Adrenal gland (tissue), 19 donors: ENCODE measurements at regions of chr19 and their contacts with region 1.

Region 1: DNA sequence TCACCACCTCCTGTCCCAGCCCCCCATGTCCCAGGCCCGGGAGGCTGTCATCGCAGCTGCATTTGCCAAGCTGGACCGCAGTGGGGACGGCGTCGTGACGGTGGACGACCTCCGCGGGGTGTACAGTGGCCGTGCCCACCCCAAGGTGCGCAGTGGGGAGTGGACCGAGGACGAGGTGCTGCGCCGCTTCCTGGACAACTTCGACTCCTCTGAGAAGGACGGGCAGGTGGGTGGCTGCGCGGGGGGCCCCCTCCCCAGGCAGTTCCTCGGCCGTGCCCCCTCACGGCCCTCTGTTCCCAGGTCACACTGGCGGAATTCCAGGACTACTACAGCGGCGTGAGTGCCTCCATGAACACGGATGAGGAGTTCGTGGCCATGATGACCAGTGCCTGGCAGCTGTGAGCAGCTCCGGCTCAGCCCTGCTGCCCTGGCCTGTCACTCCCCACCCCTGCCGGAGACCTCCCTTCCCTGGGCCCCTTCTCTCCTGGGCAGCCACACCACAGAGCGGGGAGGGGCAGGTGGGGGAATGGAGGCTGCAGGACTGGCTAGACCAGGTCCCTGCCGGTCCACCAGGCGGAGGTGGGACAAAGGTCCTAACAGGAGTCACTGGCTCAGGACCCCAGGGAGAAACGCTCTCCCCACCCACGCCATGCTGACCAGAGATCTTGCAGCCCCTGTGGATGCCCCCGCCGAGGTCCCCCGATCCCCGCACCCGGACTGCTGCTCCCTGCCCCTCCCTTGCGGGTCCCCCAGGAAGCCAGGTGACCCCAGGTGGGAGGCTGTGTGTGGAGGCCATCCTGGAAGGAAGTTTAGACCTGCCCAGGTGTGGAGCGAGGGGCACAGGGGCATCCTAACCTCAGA is 1.1 kb downstream of the CAPS start:
- DNase-seq: peak in 1 of 7 donors; percentile 20
- H3K4me3 ChIP-seq: no peak overlapping the region
- H3K27ac ChIP-seq: peak overlapping the region in 1 of 5 donors; percentile 37
- H3K4me1 ChIP-seq: peaks cover 7 to 12% of the 10 kb centered on the region in 2 donors
- H3K27me3 ChIP-seq: no peaks in the 10 kb centered on the region
- CTCF ChIP-seq: no peak
- POLR2A ChIP-seq: no peak

Region 2: DNA sequence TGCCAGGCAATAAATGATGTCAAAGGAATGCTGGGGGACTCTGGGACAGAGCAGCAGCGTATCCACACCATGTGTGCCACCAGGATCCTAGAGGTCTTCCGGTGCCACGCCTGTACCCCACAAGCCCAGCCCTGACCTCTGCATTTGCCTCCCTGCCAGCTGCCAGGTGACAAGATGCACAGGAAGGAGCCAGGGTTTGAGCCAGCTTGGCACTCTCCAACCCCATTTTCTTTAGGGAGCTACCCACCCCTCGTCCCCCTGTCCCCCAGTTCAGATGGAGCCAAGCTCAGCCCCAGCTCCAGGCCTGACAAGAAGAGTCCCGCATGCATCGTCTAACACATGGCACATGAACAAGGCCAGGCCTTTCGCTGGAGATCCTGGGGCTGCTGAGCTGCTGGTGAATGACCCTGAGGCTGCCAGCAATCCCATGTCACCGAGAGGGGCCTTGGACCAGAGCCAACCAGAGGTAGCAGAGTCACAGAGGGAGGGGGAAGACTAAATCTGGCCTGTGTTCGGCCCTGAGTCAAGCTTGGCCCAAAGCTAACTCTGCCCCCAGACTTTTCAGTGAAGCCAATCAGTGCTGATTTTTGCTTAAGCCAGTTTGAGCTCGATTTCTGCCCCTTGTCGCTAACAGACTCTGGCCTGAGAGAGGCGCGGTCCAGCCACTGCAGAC is 44.7 kb after region 1 on chr19:
- intact Hi-C with region 1: loop called in 1 of 2 experiments (anchors 5 kb)
- DNase-seq: peak; percentile 88 to 97 (median 94)
- H3K4me3 ChIP-seq: no peak overlapping the region
- H3K27ac ChIP-seq: peak overlapping the region; percentile 36 to 94 (median 82)
- H3K4me1 ChIP-seq: peaks cover 55 to 92% of the 10 kb centered on the region in 2 donors
- H3K27me3 ChIP-seq: no peaks in the 10 kb centered on the region
- CTCF ChIP-seq: no peak
- POLR2A ChIP-seq: peak in 1 of 2 donors; percentile 54

Region 3: GRCh38 chr19:6048808-6049405 is 133.8 kb after region 1 on chr19:
- intact Hi-C with region 1: no loop called
- DNase-seq: peak; percentile 67 to 90 (median 78)
- H3K4me3 ChIP-seq: no peak overlapping the region
- H3K27ac ChIP-seq: no peak overlapping the region
- H3K4me1 ChIP-seq: peaks cover 0 to 6% of the 10 kb centered on the region in 2 donors
- H3K27me3 ChIP-seq: no peaks in the 10 kb centered on the region
- CTCF ChIP-seq: peak; percentile 77 to 93 (median 84)
- POLR2A ChIP-seq: no peak